Esophagus muscularis mucosa (tissue), 4 donors: ENCODE measurements at regions of chr10 and their contacts with region 1.

Region 1: DNA sequence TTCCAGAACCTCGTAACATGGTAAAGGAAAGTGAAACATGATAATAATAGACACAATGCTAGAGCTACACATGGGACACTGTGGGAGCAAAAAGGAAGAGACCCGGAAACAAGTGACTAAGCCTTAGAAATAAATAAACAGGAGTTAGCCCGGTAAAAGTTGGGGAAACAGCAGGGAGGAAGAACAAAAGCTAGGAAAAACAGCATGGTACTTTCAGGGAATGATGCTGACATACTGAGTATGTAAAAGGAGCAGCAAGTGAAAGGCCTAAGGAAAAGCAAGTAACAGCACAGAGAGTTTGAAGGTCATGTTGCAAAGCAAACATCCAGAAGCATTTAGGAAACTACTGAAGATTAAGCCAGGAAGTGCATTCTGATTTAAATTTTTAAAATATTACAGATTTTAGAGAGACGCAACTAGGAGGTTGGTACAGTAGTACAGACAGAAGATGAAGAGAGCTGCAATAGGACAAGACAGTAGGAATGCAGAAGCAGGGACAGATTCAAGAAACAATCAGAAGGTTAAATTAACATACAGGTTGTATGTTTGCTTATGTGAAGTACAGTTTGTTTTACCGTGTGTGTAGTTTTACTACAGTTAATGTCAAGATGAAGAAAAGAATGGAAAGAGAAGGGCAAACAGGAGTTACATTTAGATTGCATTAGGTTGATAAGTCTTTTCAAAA is 63.7 kb downstream of the ARHGAP12 start:
- DNase-seq: no peak
- H3K4me3 ChIP-seq: peak overlapping the region in 2 of 4 donors; percentile 23 to 25
- H3K27ac ChIP-seq: peak overlapping the region in 3 of 4 donors; percentile 4 to 46 (median 18)
- H3K4me1 ChIP-seq: peaks cover 21 to 34% (median 32%) of the 10 kb centered on the region in 4 donors
- H3K27me3 ChIP-seq: no peaks in the 10 kb centered on the region
- CTCF ChIP-seq: no peak
- EP300 ChIP-seq: no peak
- POLR2A ChIP-seq: no peak

Region 2: DNA sequence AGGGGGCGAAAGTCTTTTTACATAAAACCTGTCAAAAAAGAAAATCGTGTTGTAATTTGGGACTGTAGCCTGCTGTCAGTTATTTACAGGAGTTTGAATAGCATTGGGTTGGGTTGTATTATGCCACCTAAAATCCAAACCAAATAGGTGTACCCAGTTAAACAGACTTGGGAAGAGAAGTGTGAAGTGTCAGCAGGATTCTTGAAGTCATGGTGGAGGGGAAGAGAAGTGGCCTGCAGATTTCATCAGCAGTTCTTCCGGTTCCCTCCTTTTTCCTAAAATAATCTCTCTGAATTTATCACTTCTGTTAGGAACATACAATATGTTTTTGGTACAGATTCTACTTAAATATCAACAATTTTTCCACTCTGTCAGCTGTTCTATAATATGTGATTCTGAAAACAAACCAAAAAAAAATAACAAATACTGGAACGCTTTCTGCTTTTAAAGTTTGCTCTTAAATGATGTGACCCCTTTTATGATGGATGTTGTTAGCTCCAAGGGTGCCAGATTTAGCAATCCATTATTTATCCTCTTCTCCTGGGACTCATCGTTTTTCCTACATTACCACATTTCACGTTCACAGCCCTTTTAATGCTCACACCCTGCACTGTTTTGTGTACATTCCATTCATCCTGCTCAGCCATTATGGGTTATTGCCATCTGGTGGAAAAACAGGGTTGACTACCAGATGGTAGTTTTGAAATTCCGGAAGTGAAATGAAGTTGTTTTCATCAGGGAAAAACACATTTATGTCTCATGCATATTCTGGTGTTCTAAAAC is 82.4 kb after region 1 on chr10:
- intact Hi-C with region 1: loop called (anchors 2 kb)
- DNase-seq: no peak
- H3K4me3 ChIP-seq: peak overlapping the region; percentile 7 to 39 (median 22)
- H3K27ac ChIP-seq: peak overlapping the region; percentile 65 to 76 (median 72)
- H3K4me1 ChIP-seq: peaks cover 4 to 37% (median 35%) of the 10 kb centered on the region in 4 donors
- H3K27me3 ChIP-seq: no peaks in the 10 kb centered on the region
- CTCF ChIP-seq: peak; percentile 54 to 63 (median 55)
- EP300 ChIP-seq: no peak
- POLR2A ChIP-seq: no peak

Region 3: DNA sequence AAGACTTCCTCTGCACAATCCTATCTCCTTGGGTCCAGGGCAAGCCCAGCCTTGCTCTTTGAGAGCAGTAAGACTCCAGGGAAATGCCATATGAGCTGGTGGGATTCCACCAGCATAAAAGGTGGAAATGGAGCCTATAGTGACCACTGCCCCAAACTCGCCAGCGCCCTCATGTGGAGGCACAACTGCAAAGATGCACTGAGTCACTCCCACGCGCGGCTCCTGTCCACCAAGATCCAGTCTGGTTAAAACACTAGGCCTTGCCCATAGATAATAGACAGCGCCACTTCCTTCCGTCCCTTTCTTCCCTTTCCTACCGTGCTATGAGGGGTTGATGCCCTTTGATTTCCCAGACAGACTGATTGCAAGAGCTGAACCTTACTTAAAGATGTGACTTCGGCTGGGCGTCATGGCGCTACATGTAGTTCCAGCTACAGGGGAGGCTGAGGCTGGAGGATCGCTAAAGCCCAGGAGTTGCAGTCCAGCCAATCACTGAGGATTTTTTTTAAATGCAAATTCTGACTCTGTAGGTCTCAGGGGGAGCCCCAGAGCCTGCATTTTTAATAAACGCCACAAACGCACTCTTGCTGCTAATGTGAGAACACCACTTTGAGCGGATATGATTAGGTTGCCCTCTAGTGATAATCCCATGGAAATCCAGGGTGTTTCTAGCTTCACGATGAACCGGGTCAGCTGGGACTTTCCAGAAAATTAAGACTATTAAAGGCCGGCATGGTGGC is 345.5 kb after region 1 on chr10:
- intact Hi-C with region 1: loop called (anchors 5 kb)
- DNase-seq: no peak
- H3K4me3 ChIP-seq: no peak overlapping the region
- H3K27ac ChIP-seq: no peak overlapping the region
- H3K4me1 ChIP-seq: no peaks in the 10 kb centered on the region
- H3K27me3 ChIP-seq: no peaks in the 10 kb centered on the region
- CTCF ChIP-seq: peak in 2 of 3 experiments; percentile 45 to 53
- EP300 ChIP-seq: no peak
- POLR2A ChIP-seq: no peak